Right cardiac atrium (tissue), 5 donors: ENCODE measurements at regions of chr6 and their contacts with region 1.

Region 1: DNA sequence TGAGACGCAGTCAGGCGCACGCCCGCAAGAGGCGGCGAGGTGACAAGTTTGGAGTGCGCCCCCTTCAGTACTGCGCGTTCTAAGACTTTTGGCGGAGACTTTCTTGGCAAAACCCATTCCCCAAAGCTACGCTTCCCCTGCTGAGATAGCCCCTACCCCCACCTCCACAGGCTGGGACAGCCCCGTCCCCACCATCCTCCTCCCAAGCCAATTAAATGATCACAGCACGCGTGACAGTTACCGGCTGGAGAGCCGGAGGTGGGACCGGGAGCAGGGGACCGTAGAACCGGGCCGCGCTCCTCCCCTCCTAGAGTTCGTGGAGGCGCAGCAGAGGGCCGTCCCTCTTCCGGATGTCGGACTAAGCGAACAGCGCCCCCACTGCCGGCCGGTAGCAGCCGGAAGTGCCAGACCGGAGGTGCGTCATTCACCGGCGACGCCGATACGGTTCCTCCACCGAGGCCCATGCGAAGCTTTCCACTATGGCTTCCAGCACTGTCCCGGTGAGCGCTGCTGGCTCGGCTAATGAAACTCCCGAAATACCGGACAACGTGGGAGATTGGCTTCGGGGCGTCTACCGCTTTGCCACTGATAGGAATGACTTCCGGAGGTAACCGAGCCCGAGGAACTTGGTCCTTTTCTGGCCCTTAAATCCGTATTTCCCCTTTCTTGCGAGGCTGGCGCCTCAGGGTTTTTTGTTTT is at the start of gene TOMM6:
- DNase-seq: peak; percentile 96 to 98 (median 98)
- ATAC-seq: peak; percentile 89 to 91
- H3K4me3 ChIP-seq: peak within 1 kb of the TSS; percentile 68
- H3K27ac ChIP-seq: peak within 1 kb of the TSS; percentile 94
- H3K4me1 ChIP-seq: no peaks in the 10 kb centered on the region
- H3K27me3 ChIP-seq: no peaks in the 10 kb centered on the region
- total RNA-seq, gene TOMM6: 123 to 162 (median 140) TPM

Region 2: DNA sequence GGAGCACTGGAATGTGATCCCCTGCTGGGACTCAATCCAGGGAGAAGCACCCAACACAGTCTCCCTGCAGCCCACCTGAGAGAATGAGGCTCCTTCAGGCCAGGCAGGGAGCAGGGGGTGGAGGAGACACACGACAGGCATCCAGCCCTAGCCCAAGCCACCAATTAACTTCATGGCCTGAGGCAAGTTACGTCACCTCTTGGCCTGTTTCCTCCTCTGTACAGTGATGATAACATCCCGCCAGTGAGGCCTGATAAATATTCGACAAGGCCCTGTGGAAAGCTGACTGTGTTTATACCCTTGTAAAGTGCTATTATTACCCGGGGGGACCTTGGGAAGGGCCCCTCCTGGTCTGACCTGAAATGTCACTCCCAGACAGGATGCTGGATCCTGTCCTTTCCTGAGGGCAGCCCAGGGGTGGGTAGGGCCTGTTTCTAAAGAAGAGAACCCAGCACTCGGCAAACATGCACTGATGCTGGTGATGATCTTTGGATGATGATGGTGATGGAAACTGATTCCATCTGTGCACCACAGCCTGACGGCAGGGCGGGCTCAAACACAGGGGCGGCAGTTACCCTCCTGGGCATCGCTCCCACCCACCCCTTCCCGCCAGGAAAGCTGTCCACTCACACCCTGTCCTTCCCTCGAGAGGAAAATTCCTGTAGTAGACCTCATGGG is 20.1 kb before region 1 on chr6:
- intact Hi-C with region 1: no loop called
- DNase-seq: peak in 2 of 3 donors; percentile 69 to 74
- ATAC-seq: peak; percentile 81 to 83
- H3K4me3 ChIP-seq: no peak overlapping the region
- H3K27ac ChIP-seq: peak overlapping the region; percentile 47
- H3K4me1 ChIP-seq: no peaks in the 10 kb centered on the region
- H3K27me3 ChIP-seq: no peaks in the 10 kb centered on the region

Region 3: DNA sequence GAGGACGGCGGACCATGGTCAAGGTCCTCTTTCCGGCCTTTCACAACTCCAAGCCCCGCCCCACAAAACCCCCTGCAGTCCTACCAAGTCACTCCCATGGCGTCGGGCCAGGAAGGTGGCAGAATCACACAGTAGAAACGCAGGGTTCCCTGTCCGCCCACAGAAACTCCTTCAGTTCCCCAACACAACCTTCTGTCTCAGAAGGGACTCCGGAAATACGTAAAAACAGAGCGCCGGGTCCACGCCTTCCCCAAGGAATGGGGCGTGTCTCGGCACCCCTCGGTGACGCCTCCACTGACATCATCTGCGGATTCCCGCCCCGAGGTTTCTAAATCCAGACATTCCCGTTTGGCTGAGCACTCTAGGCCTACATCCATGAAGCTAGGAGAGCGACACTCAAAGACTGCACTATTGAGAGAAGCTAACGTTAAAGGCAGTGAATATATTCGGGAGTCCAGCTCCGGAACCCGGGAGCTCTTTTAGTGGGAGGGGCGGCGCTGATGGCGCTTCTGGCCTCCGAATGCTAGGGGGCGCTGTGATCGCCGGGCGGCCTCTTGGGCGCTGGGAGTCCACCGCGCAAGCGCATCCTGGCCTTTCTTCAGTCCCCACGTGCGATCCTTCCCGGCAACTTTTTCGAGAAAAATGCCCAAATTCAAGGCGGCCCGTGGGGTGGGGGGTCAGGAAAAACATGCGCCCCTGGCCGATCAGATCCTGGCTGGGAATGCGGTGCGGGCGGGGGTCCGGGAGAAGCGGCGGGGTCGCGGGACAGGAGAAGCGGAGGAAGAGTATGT is 133.7 kb after region 1 on chr6 and contains the starts of genes BYSL and MED20:
- intact Hi-C with region 1: loop called in 1 of 4 experiments (anchors 10 kb)
- DNase-seq: peak; percentile 91 to 96 (median 96)
- ATAC-seq: peak; percentile 98
- H3K4me3 ChIP-seq: peak within 1 kb of the TSS; percentile 92
- H3K27ac ChIP-seq: peak within 1 kb of the TSS; percentile 99
- H3K4me1 ChIP-seq: no peaks in the 10 kb centered on the region
- H3K27me3 ChIP-seq: no peaks in the 10 kb centered on the region
- total RNA-seq, gene BYSL: 7.4 to 12.4 (median 9.5) TPM
- total RNA-seq, gene MED20: 12.6 to 16.0 (median 14.1) TPM

Region 4: GRCh38 chr6:41936073-41936837 is 148.9 kb after region 1 on chr6:
- intact Hi-C with region 1: loop called in 3 of 4 experiments (anchors 10 kb)
- DNase-seq: peak; percentile 69 to 80 (median 79)
- ATAC-seq: peak; percentile 58 to 68
- H3K4me3 ChIP-seq: no peak overlapping the region
- H3K27ac ChIP-seq: no peak overlapping the region
- H3K4me1 ChIP-seq: peaks cover 20% of the 10 kb centered on the region
- H3K27me3 ChIP-seq: no peaks in the 10 kb centered on the region